ENCODE measurements at regions of chr3 and their contacts with region 1.

Region 1: DNA sequence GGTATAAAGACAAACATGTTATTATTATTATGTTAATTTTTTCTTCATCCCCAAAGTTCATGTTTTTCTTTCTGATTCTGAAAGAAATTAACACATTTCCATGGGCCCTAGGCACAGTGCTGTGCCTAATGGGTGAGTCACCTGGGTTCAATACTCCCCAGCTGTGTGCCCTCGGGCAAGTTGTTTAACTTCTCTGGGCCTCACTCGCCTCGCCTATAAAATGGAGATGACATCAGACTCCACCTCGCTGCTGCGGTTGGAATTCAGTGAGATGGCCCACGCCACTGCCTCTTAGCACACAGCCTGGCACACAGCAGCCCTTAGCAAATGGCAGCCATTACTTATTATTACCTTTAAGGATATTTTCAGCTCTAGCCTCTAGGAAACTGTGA is 22.6 kb downstream of the DNASE1L3 start:
- DNase-seq: no peak
- CTCF ChIP-seq: no peak

Region 2: GRCh38 chr3:58167431-58168351 is 20.5 kb before region 1 on chr3:
- CTCF ChIA-PET with region 1: interaction called, 23 read pairs
- POLR2A ChIA-PET with region 1: no interaction called
- DNase-seq: peak; percentile 83
- CTCF ChIP-seq: peak; percentile 85

Region 3: GRCh38 chr3:58206406-58207011 is 18.3 kb after region 1 on chr3:
- CTCF ChIA-PET with region 1: interaction called, 195 read pairs
- POLR2A ChIA-PET with region 1: no interaction called
- DNase-seq: no peak
- CTCF ChIP-seq: no peak

Region 4: DNA sequence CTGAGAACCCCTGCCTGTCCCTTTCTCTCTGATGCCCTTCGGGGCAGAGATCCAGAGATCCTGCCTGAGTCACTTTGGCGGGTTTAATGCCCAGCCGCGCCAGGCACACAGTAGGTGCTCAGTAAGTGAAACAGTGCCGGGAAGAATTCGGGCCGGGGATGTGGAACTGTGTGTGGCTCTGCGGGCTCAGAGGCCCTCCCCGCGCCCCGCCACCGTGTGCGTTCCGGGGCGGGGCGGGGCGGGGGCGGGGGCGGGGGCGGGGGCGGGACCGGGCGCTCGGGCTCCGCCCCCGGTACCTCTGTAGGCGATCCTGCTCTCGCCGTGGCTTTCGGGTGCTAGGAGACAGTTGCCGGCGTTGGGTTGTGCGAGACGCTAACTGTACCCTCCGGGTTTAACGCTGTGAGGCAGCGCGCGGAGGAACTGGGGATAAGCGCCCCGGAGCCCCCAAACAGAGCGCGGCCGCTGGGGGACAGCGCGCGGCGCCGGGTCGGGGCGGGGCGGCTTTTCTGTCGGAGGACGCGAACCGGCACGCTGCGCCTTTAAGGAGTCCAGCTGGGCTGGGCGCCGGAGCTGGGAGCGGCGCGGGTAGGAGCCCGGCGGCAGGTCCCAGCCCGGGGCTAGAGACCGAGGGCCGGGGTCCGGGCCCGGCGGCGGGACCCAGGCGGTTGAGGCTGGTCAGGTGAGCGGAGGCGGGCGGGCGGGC is 49.2 kb after region 1 on chr3 and contains the start of gene ABHD6:
- CTCF ChIA-PET with region 1: interaction called, 18 read pairs
- POLR2A ChIA-PET with region 1: interaction called, 5 read pairs
- DNase-seq: peak; percentile 90
- CTCF ChIP-seq: peak; percentile 51

Region 5: GRCh38 chr3:58324391-58325390 is 136.5 kb after region 1 on chr3:
- CTCF ChIA-PET with region 1: interaction called, 10 read pairs
- POLR2A ChIA-PET with region 1: no interaction called
- DNase-seq: no peak
- CTCF ChIP-seq: no peak

Measured in GM10248 (cell line).